Mammary epithelial cell (primary cell): ENCODE measurements at regions of chr13 and their contacts with region 1.

Region 1: GRCh38 chr13:24671386-24672107 is 8.7 kb upstream of the ATP12A start:
- DNase-seq: peak; percentile 87
- H3K4me3 ChIP-seq: peak overlapping the region in 1 of 3 experiments; percentile 1
- H3K27ac ChIP-seq: peak overlapping the region; percentile 99
- H3K4me1 ChIP-seq: peaks cover 44% of the 10 kb centered on the region
- H3K27me3 ChIP-seq: no peaks in the 10 kb centered on the region
- CTCF ChIP-seq: peak; percentile 61 to 83

Region 2: DNA sequence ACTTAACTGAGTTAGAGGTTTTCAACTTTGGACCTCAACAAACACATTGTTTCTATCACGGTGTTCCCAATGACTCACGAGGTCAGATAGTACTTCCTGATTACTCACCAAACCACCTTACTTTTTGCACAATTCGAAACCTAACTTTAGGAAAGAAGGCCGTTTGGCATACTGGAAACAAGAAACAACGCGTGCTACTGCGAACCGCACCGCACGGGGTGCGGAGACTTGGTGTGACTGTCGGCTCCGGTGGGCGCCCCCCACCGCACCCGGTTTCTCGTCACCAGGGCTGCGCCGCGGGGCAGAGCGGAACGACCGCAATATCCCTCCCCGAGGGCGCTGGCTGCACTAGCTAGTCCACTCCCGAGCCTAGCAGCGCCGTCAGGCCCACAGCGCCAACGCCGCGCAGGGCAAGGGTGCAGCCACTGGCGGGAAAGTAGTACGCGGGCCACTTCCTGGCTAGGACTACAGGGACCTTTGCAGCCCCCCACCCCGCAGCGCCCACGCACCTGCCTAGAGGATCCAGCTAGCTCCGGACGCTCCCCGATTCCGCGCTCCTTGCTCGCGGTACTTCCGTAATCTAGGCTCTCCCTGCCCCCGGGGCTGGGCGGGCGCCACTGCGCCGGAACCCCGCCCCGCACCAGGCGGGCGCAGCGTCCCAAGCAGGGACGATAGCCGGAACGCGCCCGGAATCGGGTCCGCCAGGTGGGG is 159.2 kb before region 1 on chr13 and contains the start of gene PARP4:
- CTCF ChIA-PET with region 1: no interaction called
- dilution Hi-C with region 1: no loop called
- in situ Hi-C with region 1: no loop called
- intact Hi-C with region 1: loop called (anchors 5 kb)
- DNase-seq: peak; percentile 94
- H3K4me3 ChIP-seq: peak within 1 kb of the TSS; percentile 55 to 87 (median 72)
- H3K27ac ChIP-seq: peak within 1 kb of the TSS; percentile 94
- H3K4me1 ChIP-seq: peaks cover 9% of the 10 kb centered on the region
- H3K27me3 ChIP-seq: no peaks in the 10 kb centered on the region
- CTCF ChIP-seq: no peak
- total RNA-seq, gene PARP4: 48.3 to 51.0 TPM

Region 3: GRCh38 chr13:24574847-24575246 is 96.7 kb before region 1 on chr13:
- CTCF ChIA-PET with region 1: no interaction called
- dilution Hi-C with region 1: no loop called
- in situ Hi-C with region 1: no loop called
- intact Hi-C with region 1: loop called (anchors 1 kb)
- DNase-seq: no peak
- H3K4me3 ChIP-seq: no peak overlapping the region
- H3K27ac ChIP-seq: no peak overlapping the region
- H3K4me1 ChIP-seq: no peaks in the 10 kb centered on the region
- H3K27me3 ChIP-seq: no peaks in the 10 kb centered on the region
- CTCF ChIP-seq: no peak

Region 4: GRCh38 chr13:24605923-24606372 is 65.6 kb before region 1 on chr13:
- CTCF ChIA-PET with region 1: interaction called, 6 read pairs
- dilution Hi-C with region 1: no loop called
- in situ Hi-C with region 1: no loop called
- intact Hi-C with region 1: loop called (anchors 1 kb)
- DNase-seq: peak; percentile 36
- H3K4me3 ChIP-seq: no peak overlapping the region
- H3K27ac ChIP-seq: no peak overlapping the region
- H3K4me1 ChIP-seq: peaks cover 7% of the 10 kb centered on the region
- H3K27me3 ChIP-seq: no peaks in the 10 kb centered on the region
- CTCF ChIP-seq: peak; percentile 47 to 61

Region 5: GRCh38 chr13:24627099-24627714 is 44.3 kb before region 1 on chr13:
- CTCF ChIA-PET with region 1: interaction called, 5 read pairs
- dilution Hi-C with region 1: no loop called
- in situ Hi-C with region 1: loop called in 1 of 2 experiments (anchors 10 kb)
- intact Hi-C with region 1: loop called (anchors 1 kb)
- DNase-seq: no peak
- H3K4me3 ChIP-seq: no peak overlapping the region
- H3K27ac ChIP-seq: no peak overlapping the region
- H3K4me1 ChIP-seq: peaks cover 21% of the 10 kb centered on the region
- H3K27me3 ChIP-seq: no peaks in the 10 kb centered on the region
- CTCF ChIP-seq: peak; percentile 70 to 81

Region 6: GRCh38 chr13:24648990-24649687 is 22.4 kb before region 1 on chr13:
- CTCF ChIA-PET with region 1: no interaction called
- dilution Hi-C with region 1: no loop called
- in situ Hi-C with region 1: no loop called
- intact Hi-C with region 1: loop called (anchors 2 kb)
- DNase-seq: peak; percentile 45
- H3K4me3 ChIP-seq: no peak overlapping the region
- H3K27ac ChIP-seq: peak overlapping the region; percentile 58
- H3K4me1 ChIP-seq: peaks cover 19% of the 10 kb centered on the region
- H3K27me3 ChIP-seq: no peaks in the 10 kb centered on the region
- CTCF ChIP-seq: no peak

Region 7: DNA sequence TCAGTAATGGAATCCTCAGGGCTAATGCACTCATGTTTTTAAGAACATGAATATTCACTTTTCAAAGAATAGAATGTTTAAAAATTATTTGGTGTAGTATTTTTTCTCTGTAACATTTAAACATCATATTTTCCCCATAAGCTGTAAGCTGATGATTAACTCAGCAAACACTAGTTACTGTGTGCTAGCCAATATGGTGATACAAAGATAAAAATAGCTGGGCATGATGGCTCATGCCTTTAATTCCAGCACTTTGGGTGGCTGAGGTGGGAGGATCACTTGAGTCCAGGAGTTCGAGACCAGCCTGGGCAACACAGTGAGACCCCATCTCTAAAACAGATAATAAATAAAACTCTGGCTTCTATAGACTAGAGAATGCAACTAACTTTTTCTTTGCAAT is 105.6 kb after region 1 on chr13:
- CTCF ChIA-PET with region 1: no interaction called
- dilution Hi-C with region 1: no loop called
- in situ Hi-C with region 1: no loop called
- intact Hi-C with region 1: no loop called
- DNase-seq: peak; percentile 49
- H3K4me3 ChIP-seq: no peak overlapping the region
- H3K27ac ChIP-seq: no peak overlapping the region
- H3K4me1 ChIP-seq: no peaks in the 10 kb centered on the region
- H3K27me3 ChIP-seq: peaks cover 2% of the 10 kb centered on the region
- CTCF ChIP-seq: no peak

Region 8: GRCh38 chr13:24922745-24923591 is 251.4 kb after region 1 on chr13:
- CTCF ChIA-PET with region 1: no interaction called
- dilution Hi-C with region 1: no loop called
- in situ Hi-C with region 1: no loop called
- intact Hi-C with region 1: loop called (anchors 5 kb)
- DNase-seq: peak; percentile 97
- H3K4me3 ChIP-seq: peak overlapping the region; percentile 81 to 93 (median 91)
- H3K27ac ChIP-seq: peak overlapping the region; percentile 82
- H3K4me1 ChIP-seq: peaks cover 2% of the 10 kb centered on the region
- H3K27me3 ChIP-seq: no peaks in the 10 kb centered on the region
- CTCF ChIP-seq: no peak